GM12878 (cell line): ENCODE measurements at regions of chr1 and their contacts with region 1.

Region 1: DNA sequence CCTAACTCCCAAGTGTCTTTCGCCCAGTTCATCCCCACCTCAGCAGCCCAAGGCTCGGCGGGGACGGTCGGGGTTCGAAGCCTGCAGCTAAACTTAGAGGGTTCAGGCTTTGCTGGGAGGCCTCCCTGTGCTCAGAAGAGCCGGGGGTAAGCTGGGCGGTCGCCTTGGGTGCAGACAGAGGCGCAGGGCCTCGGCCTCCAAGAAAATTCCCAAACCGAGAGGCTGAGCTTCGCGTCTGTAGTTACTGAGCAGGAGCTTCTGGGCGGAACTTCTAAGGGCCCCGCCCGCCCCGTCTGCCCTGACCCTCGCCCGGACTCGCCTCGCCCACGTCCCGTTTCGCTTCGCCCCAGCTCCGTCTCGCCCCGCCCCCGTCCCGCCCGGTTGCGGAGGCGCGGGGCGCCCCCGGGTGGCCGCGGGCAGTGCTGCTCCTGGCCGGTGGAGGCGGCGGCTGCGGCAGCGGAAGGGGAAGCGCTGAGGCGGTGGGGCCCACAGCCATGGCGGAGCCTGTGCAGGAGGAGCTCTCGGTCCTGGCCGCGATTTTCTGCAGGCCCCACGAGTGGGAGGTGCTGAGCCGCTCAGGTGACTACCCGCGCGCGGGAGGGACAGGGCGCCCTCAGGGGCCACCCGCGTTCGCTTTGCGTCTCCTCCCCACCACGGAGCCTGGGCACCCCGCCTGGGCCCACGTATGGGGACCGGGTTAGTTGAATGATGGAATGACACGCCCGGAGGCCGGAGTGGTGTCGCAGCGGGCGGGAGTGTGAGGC is at the start of gene RWDD3:
- DNase-seq: peak; percentile 53
- ATAC-seq: peak; percentile 98
- H3K4me3 ChIP-seq: peak within 1 kb of the TSS; percentile 79
- H3K27ac ChIP-seq: peak within 1 kb of the TSS; percentile 63
- H3K4me1 ChIP-seq: peaks cover 4% of the 10 kb centered on the region; the same call in 1 of the 2 replicates
- H3K27me3 ChIP-seq: peaks cover 0 to 3% of the 10 kb centered on the region in 2 experiments; a peak in 2 of 4 replicates
- CTCF ChIP-seq: peak; percentile 65 to 90 (median 72); a peak in 5 of 6 replicates
- EP300 ChIP-seq: no peak
- POLR2A ChIP-seq: peak; percentile 96
- RAD21 ChIP-seq: peak; percentile 88
- polyA plus RNA-seq, gene RWDD3: 41.1 to 42.9 TPM

Region 2: GRCh38 chr1:94854458-94855306 is 379.2 kb before region 1 on chr1:
- CTCF ChIA-PET with region 1: interaction called, 10 read pairs
- POLR2A ChIA-PET with region 1: no interaction called
- RAD21 ChIA-PET with region 1: interaction called, 20 read pairs
- SMC1A ChIA-PET with region 1: interaction called, 5 read pairs
- in situ Hi-C with region 1: no loop called
- intact Hi-C with region 1: loop called (anchors 10 kb)
- DNase-seq: peak; percentile 48
- ATAC-seq: peak; percentile 100
- H3K4me3 ChIP-seq: peak overlapping the region; percentile 53; the same call in 1 of the 2 replicates
- H3K27ac ChIP-seq: no peak overlapping the region
- H3K4me1 ChIP-seq: no peaks in the 10 kb centered on the region
- H3K27me3 ChIP-seq: no peaks in the 10 kb centered on the region; a peak in 1 of 4 replicates
- CTCF ChIP-seq: peak; percentile 87 to 93 (median 93)
- EP300 ChIP-seq: no peak
- POLR2A ChIP-seq: no peak
- RAD21 ChIP-seq: peak; percentile 87

Region 3: DNA sequence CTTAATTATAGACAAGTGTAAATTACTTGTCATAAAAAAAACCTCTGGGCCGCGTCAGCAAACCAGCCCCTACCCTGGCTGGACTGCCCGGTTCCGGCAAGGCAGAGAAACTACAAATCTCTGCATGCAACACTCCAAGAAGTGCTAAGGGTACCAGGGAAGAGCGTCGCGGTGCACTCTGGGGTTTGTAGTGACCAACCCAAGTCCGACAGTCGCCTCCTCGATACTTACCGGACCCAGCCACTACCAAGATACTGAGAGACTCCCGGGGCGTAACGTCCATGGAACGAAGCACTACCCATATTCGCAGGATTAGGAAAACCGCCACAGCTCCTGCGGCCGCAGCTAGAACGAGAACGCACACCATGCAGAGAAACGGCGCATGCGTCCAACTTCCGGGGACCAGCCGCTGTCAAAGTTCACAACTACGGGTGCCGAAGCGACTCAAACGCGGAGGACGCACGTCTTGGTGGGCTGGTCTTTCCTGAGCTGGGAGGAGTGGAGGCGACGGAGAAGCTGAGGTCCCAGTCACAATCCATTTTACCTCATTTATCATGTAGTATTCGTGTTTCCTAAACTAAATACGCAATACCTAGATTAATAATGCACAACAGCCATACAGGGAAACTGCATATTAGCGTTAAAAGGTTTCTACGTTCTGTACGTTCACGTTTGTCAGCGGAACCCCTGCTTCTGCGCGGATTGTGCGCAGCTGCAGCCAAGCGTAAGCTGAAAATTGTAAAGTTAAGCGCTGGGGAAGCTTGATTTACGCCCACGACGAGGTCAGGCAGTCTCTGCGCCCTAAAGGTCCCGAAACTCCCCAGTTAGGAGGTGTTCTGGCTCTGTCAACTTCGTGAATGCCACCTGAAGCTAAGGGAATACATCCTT is 161.1 kb before region 1 on chr1 and contains the start of gene ALG14:
- CTCF ChIA-PET with region 1: interaction called, 13 read pairs
- POLR2A ChIA-PET with region 1: interaction called, 4 read pairs
- RAD21 ChIA-PET with region 1: interaction called, 21 read pairs
- SMC1A ChIA-PET with region 1: interaction called, 7 read pairs
- in situ Hi-C with region 1: no loop called
- intact Hi-C with region 1: no loop called
- DNase-seq: peak; percentile 91
- ATAC-seq: peak; percentile 99
- H3K4me3 ChIP-seq: peak within 1 kb of the TSS; percentile 76
- H3K27ac ChIP-seq: peak within 1 kb of the TSS; percentile 94
- H3K4me1 ChIP-seq: no peaks in the 10 kb centered on the region
- H3K27me3 ChIP-seq: no peaks in the 10 kb centered on the region
- CTCF ChIP-seq: no peak
- EP300 ChIP-seq: no peak
- POLR2A ChIP-seq: peak; percentile 71
- RAD21 ChIP-seq: no peak
- polyA plus RNA-seq, gene ALG14: 15.1 to 19.2 TPM

Region 4: GRCh38 chr1:95223110-95223509 is 10.8 kb before region 1 on chr1:
- CTCF ChIA-PET with region 1: interaction called, 12 read pairs
- POLR2A ChIA-PET with region 1: interaction called, 8 read pairs
- RAD21 ChIA-PET with region 1: interaction called, 8 read pairs
- SMC1A ChIA-PET with region 1: interaction called, 4 read pairs
- in situ Hi-C with region 1: no loop called
- intact Hi-C with region 1: no loop called
- DNase-seq: no peak
- ATAC-seq: no peak
- H3K4me3 ChIP-seq: no peak overlapping the region
- H3K27ac ChIP-seq: no peak overlapping the region
- H3K4me1 ChIP-seq: no peaks in the 10 kb centered on the region
- H3K27me3 ChIP-seq: no peaks in the 10 kb centered on the region
- CTCF ChIP-seq: no peak
- EP300 ChIP-seq: no peak
- POLR2A ChIP-seq: no peak
- RAD21 ChIP-seq: no peak